B cell (primary cell): ENCODE measurements at regions of chr3 and their contacts with region 1.

Region 1: DNA sequence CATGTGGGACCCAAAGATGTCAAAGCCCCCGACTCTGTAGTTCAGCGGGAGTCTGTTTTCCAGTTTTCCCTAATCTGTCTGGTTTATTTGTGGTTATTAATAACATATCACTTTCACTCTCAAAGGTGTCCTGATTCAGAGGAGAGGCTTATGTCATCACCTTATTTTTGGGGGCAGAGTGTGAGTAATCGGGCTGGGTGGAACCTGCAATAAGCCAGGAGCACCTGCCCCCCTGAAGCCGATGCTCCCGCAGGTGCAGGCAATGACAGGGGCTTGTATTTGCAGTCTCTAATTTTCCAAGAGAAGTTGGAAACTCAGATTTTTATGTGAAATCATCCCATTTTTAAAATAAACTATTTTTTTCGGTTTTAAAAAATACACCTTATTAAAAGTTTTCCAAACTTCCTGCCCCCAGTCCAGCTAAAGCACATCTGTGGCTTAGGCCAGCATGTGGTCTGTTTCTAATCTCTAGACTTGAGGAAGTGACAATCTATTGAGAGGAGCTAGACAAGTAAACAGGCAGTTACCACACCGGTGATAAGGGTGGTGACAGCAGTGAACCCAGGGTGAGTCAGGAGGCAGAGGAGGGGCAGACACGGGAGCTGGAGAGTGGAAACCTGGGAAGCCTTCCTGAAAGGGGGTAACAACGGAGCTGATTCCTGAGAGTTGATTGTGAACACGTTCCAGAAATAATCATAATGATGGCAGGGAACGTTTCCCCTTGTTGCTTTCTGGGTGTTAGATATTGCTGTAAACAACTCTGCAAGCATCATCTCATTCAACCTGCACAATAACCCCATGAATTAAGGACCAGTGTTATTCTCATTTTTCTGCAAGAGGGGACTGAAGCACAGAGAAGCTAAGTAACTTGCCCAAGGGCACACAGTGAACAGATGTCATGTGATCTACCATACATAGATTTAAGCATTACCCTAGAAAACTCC is 37.3 kb downstream of the BHLHE40 start:
- DNase-seq: peak; percentile 73
- ATAC-seq: peak; percentile 22
- H3K4me3 ChIP-seq: peak overlapping the region in 1 of 5 experiments; percentile 25
- H3K4me3 Mint-ChIP-seq: peak overlapping the region; percentile 43
- H3K27ac ChIP-seq: peak overlapping the region; percentile 61 to 86
- H3K27ac Mint-ChIP-seq: peak overlapping the region; percentile 86
- H3K4me1 ChIP-seq: peaks cover 61 to 82% of the 10 kb centered on the region in 2 donors
- H3K4me1 Mint-ChIP-seq: peaks cover 78% of the 10 kb centered on the region
- H3K27me3 ChIP-seq: no peaks in the 10 kb centered on the region
- H3K27me3 Mint-ChIP-seq: no peaks in the 10 kb centered on the region
- CTCF ChIP-seq: no peak

Region 2: DNA sequence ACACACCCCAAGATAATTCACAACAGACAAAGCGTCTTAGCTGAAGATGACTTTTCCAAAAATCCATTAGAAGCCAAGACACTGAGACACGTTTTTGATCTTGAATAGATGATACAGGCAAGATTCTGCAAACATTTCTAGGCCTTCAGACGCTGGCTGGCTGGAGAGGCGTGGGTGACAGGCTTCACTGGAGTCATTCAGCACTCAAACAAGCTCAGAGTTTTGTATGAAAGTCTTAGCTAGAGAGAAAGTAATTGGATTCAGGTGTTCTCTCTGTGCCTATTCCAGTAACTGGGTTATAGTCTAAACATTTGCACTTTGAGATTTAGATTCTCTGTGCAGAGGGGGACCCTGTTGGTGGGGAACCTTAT is 184.9 kb before region 1 on chr3:
- CTCF ChIA-PET with region 1: interaction called, 3 read pairs
- POLR2A ChIA-PET with region 1: no interaction called
- intact Hi-C with region 1: loop called (anchors 2 kb)
- DNase-seq: no peak
- ATAC-seq: peak; percentile 11
- H3K4me3 ChIP-seq: peak overlapping the region in 1 of 5 experiments; percentile 54
- H3K4me3 Mint-ChIP-seq: peak overlapping the region; percentile 75
- H3K27ac ChIP-seq: peak overlapping the region in 1 of 2 donors; percentile 64
- H3K27ac Mint-ChIP-seq: peak overlapping the region; percentile 80
- H3K4me1 ChIP-seq: peaks cover 36 to 46% of the 10 kb centered on the region in 2 donors
- H3K4me1 Mint-ChIP-seq: peaks cover 62% of the 10 kb centered on the region
- H3K27me3 ChIP-seq: no peaks in the 10 kb centered on the region
- H3K27me3 Mint-ChIP-seq: no peaks in the 10 kb centered on the region
- CTCF ChIP-seq: no peak

Region 3: GRCh38 chr3:4928277-4928789 is 88.2 kb before region 1 on chr3:
- CTCF ChIA-PET with region 1: no interaction called
- POLR2A ChIA-PET with region 1: no interaction called
- intact Hi-C with region 1: no loop called
- DNase-seq: no peak
- ATAC-seq: no peak
- H3K4me3 ChIP-seq: no peak overlapping the region
- H3K4me3 Mint-ChIP-seq: no peak overlapping the region
- H3K27ac ChIP-seq: no peak overlapping the region
- H3K27ac Mint-ChIP-seq: no peak overlapping the region
- H3K4me1 ChIP-seq: peaks cover 0 to 5% of the 10 kb centered on the region in 2 donors
- H3K4me1 Mint-ChIP-seq: peaks cover 9% of the 10 kb centered on the region
- H3K27me3 ChIP-seq: no peaks in the 10 kb centered on the region
- H3K27me3 Mint-ChIP-seq: no peaks in the 10 kb centered on the region
- CTCF ChIP-seq: no peak

Region 4: GRCh38 chr3:4994823-4995499 is 21.5 kb before region 1 on chr3:
- CTCF ChIA-PET with region 1: interaction called, 4 read pairs
- POLR2A ChIA-PET with region 1: interaction called, 7 read pairs
- intact Hi-C with region 1: loop called (anchors 2 kb)
- DNase-seq: no peak
- ATAC-seq: no peak
- H3K4me3 ChIP-seq: no peak overlapping the region
- H3K4me3 Mint-ChIP-seq: no peak overlapping the region
- H3K27ac ChIP-seq: no peak overlapping the region
- H3K27ac Mint-ChIP-seq: peak overlapping the region; percentile 3
- H3K4me1 ChIP-seq: peaks cover 0 to 6% of the 10 kb centered on the region in 2 donors
- H3K4me1 Mint-ChIP-seq: peaks cover 15% of the 10 kb centered on the region
- H3K27me3 ChIP-seq: no peaks in the 10 kb centered on the region
- H3K27me3 Mint-ChIP-seq: no peaks in the 10 kb centered on the region
- CTCF ChIP-seq: no peak

Region 5: DNA sequence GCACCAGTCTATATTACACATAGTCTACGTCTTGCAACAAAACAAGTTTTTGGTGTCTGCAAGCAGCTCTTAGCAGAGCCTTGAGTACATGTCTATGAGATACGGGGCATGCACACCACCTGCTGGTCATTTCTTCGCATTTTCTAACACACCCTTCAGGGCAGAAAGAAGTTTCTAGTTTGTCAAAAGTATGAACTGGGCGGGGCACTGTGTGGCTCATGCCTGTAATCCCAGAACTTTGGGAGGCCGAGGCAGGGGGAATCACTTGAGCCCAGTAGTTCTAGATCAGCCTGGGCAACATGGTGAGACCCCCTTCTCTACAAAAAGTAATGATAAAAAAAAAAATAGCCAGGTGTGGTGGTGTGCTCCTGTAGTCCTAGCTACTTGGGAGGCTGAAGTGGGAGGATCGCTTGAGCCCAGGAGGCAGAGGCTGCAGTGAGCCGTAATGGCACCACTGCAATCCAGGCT is 41.4 kb after region 1 on chr3:
- CTCF ChIA-PET with region 1: interaction called, 12 read pairs
- POLR2A ChIA-PET with region 1: no interaction called
- intact Hi-C with region 1: loop called (anchors 5 kb)
- DNase-seq: peak; percentile 86
- ATAC-seq: peak; percentile 89
- H3K4me3 ChIP-seq: no peak overlapping the region
- H3K4me3 Mint-ChIP-seq: no peak overlapping the region
- H3K27ac ChIP-seq: no peak overlapping the region
- H3K27ac Mint-ChIP-seq: no peak overlapping the region
- H3K4me1 ChIP-seq: peaks cover 37 to 44% of the 10 kb centered on the region in 2 donors
- H3K4me1 Mint-ChIP-seq: peaks cover 36% of the 10 kb centered on the region
- H3K27me3 ChIP-seq: peaks cover 0 to 4% (median 0%) of the 10 kb centered on the region in 4 experiments
- H3K27me3 Mint-ChIP-seq: peaks cover 7% of the 10 kb centered on the region
- CTCF ChIP-seq: peak; percentile 82

Region 6: GRCh38 chr3:5194341-5195159 is 178.1 kb after region 1 on chr3:
- CTCF ChIA-PET with region 1: interaction called, 3 read pairs
- POLR2A ChIA-PET with region 1: no interaction called
- intact Hi-C with region 1: loop called (anchors 2 kb)
- DNase-seq: peak; percentile 48
- ATAC-seq: peak; percentile 56
- H3K4me3 ChIP-seq: no peak overlapping the region
- H3K4me3 Mint-ChIP-seq: peak overlapping the region; percentile 66
- H3K27ac ChIP-seq: peak overlapping the region; percentile 81 to 97
- H3K27ac Mint-ChIP-seq: peak overlapping the region; percentile 82
- H3K4me1 ChIP-seq: peaks cover 86 to 91% of the 10 kb centered on the region in 2 donors
- H3K4me1 Mint-ChIP-seq: peaks cover 87% of the 10 kb centered on the region
- H3K27me3 ChIP-seq: no peaks in the 10 kb centered on the region
- H3K27me3 Mint-ChIP-seq: no peaks in the 10 kb centered on the region
- CTCF ChIP-seq: no peak